ENCODE measurements at regions of chrX and their contacts with region 1.

Region 1: DNA sequence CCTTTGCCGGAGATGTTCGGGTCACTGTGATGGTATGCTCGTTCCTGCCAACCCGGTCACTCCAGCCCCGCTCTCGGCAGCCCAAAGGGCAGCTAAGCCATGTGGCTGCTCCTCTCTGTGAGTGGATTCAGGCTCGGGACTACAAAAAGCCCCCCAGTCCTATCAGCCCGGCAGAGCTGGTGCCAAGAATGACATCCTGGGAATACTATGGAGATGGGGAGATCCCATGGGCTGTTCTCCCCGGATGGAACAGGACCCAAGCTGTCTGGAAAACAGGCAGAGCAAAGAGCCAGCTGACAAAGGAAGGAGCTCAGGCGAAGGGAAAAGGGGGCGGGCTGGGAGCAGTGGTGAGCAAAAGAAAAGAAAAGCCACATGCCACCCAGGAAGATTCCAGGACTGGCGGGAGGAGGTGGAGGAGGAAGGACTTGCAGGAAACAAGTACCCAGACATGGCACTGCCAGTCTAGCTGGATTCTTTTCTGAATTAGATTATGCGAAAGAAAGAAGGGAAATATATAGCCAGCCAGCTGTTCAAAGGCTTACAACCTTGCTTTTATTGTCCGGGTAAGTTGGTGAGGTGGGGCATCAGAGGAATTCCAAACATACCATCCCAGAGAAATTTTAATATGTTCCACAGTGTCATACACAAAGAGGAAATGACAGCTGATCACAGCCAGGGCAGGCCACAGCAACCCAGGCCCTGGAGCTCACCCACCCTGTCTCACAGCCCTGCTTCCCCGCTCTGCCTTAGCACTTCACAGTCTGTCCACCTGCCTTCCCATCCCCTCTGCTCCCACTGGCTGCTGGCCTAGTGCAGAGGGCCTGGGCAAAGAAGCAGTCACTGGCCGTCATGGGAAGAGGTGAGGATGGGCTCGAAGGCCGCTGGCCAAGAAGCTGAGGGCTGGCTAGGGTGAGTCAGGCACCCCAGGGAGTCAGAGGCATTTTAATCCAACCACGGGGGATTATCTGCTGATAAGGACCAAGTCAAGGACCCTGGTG is 3.4 kb downstream of the NDP start:
- DNase-seq: peak in 2 of 7 donors; percentile 16 to 31
- H3K4me3 ChIP-seq: no peak overlapping the region
- H3K27ac ChIP-seq: no peak overlapping the region
- H3K4me1 ChIP-seq: no peaks in the 10 kb centered on the region
- H3K27me3 ChIP-seq: peaks cover 48% of the 10 kb centered on the region
- CTCF ChIP-seq: no peak
- POLR2A ChIP-seq: no peak

Region 2: DNA sequence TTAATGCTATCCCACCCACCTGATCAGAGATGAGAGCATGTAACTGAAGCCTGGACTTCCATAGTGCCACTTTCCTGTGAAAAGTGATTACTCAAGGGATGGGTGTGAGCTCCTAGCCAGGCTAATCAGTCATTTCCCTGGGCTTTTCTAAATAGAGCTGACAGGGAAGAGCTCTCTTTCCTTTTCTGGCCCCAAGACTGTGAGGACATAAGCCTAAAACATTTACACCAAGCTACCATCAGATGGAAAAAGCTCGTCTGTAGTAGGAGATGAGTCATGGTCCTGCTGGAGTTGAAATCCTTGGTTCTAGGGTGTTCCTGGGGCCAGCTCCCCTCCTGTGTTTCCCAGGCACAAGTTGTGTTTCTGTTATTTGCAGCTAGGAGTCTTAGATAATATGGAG is 55.8 kb after region 1 on chrX:
- intact Hi-C with region 1: loop called in 1 of 2 experiments (anchors 10 kb)
- DNase-seq: no peak
- H3K4me3 ChIP-seq: no peak overlapping the region
- H3K27ac ChIP-seq: no peak overlapping the region
- H3K4me1 ChIP-seq: no peaks in the 10 kb centered on the region
- H3K27me3 ChIP-seq: peaks cover 8% of the 10 kb centered on the region
- CTCF ChIP-seq: no peak
- POLR2A ChIP-seq: no peak

Region 3: DNA sequence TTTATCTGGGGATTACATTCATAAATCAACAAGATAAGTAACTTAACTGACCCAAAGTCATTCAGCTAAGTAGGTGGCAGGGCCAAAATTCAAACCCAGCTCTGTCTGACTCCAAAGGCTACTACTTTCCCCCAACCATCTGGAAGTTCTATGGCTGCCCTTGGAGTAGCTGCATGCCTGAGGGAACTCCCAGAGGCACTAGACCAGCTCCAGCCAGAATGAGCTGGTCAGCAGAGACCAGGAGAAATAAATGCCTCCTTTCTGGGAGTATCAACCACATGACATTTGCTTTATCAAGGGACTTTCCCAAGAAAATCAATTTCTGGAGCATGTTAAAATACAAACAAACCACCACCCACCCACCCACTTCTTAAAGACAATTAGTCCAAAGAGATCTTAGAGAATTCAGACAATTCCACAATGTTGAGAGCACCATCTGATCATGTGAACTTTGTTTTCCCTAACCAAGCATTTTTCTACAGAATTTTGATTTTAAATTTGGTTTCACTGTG is 193.2 kb after region 1 on chrX:
- intact Hi-C with region 1: no loop called
- DNase-seq: no peak
- H3K4me3 ChIP-seq: no peak overlapping the region
- H3K27ac ChIP-seq: no peak overlapping the region
- H3K4me1 ChIP-seq: no peaks in the 10 kb centered on the region
- H3K27me3 ChIP-seq: no peaks in the 10 kb centered on the region
- CTCF ChIP-seq: no peak
- POLR2A ChIP-seq: no peak

Region 4: GRCh38 chrX:44400588-44400987 is 430.8 kb after region 1 on chrX:
- intact Hi-C with region 1: no loop called
- DNase-seq: no peak
- H3K4me3 ChIP-seq: no peak overlapping the region
- H3K27ac ChIP-seq: no peak overlapping the region
- H3K4me1 ChIP-seq: no peaks in the 10 kb centered on the region
- H3K27me3 ChIP-seq: peaks cover 6% of the 10 kb centered on the region
- CTCF ChIP-seq: no peak
- POLR2A ChIP-seq: no peak

Measured in adrenal gland (tissue), 19 donors.